CD4-positive, alpha-beta memory T cell (primary cell): ENCODE measurements at regions of chr9 and their contacts with region 1.

Region 1: DNA sequence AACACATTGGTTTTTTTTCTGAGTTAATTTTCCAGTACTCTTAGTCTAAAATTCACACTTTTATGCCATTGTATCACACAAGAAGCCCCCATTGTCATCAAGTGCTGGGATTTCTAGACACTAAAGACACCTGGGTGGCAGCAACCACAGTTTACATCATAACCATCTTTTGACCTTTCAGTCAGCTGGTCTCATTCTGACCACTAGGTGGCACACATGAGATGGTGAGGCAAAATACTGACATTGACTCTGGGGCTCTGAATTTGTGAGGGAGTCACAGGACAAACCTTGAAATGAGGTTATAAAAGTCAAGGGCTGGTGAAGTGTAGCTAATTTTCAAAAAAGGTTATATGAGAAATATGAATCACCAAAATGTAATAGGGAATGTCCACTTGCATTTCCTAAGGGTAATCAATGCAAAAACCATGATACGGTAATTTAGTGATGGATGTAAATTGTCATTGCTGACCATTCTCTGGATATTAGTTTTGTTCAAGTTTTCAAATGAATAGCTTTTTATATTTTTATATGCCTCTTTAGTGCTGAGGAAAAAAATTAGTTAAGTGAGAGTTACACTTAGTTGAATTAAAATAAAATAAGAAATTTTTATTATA is 229.4 kb downstream of the DMAC1 start:
- DNase-seq: peak; percentile 58 to 66 (median 63)
- H3K4me3 ChIP-seq: no peak overlapping the region
- H3K4me3 Mint-ChIP-seq: no peak overlapping the region
- H3K27ac ChIP-seq: no peak overlapping the region
- H3K27ac Mint-ChIP-seq: peak overlapping the region in 1 of 7 donors; percentile 32
- H3K4me1 ChIP-seq: no peaks in the 10 kb centered on the region
- H3K4me1 Mint-ChIP-seq: peaks cover 0 to 4% (median 0%) of the 10 kb centered on the region in 4 donors
- H3K27me3 ChIP-seq: no peaks in the 10 kb centered on the region
- H3K27me3 Mint-ChIP-seq: peaks cover 13% of the 10 kb centered on the region in 2 donors

Region 2: GRCh38 chr9:7613931-7614330 is 43.7 kb after region 1 on chr9:
- CTCF ChIA-PET with region 1: interaction called, 49 read pairs
- POLR2A ChIA-PET with region 1: interaction called, 4 read pairs
- intact Hi-C with region 1: loop called (anchors 1 kb)
- DNase-seq: peak in 4 of 5 donors; percentile 32 to 34 (median 34)
- H3K4me3 ChIP-seq: peak overlapping the region in 1 of 2 donors; percentile 16
- H3K4me3 Mint-ChIP-seq: peak overlapping the region; percentile 58 to 85 (median 78)
- H3K27ac ChIP-seq: no peak overlapping the region
- H3K27ac Mint-ChIP-seq: peak overlapping the region in 6 of 7 donors; percentile 38 to 88 (median 76)
- H3K4me1 ChIP-seq: peaks cover 35% of the 10 kb centered on the region
- H3K4me1 Mint-ChIP-seq: peaks cover 17 to 45% (median 32%) of the 10 kb centered on the region in 4 donors
- H3K27me3 ChIP-seq: no peaks in the 10 kb centered on the region
- H3K27me3 Mint-ChIP-seq: no peaks in the 10 kb centered on the region

Region 3: DNA sequence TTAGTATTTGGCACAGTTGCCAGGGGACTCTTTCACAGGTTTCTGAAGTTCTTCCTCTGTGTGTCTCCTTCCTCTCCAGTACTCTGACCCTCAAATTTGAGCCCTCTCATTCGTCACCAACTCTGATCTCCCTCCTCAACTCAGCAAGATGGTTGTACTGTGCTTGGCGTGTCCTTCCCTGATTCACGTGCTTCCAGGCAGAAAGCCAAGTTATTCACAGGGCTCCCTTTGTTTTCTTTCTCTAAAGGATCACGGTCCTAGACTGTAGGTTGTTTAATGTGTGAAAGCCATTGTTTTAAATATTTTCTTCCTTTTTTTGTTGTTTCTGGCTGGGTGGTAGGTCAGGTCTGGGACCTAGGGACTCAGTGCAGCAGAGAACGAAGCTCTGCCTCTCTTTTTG is 86.4 kb after region 1 on chr9:
- CTCF ChIA-PET with region 1: interaction called, 18 read pairs
- POLR2A ChIA-PET with region 1: no interaction called
- intact Hi-C with region 1: loop called (anchors 1 kb)
- DNase-seq: no peak
- H3K4me3 ChIP-seq: no peak overlapping the region
- H3K4me3 Mint-ChIP-seq: no peak overlapping the region
- H3K27ac ChIP-seq: no peak overlapping the region
- H3K27ac Mint-ChIP-seq: peak overlapping the region in 2 of 7 donors; percentile 2 to 44
- H3K4me1 ChIP-seq: no peaks in the 10 kb centered on the region
- H3K4me1 Mint-ChIP-seq: peaks cover 0 to 5% (median 4%) of the 10 kb centered on the region in 4 donors
- H3K27me3 ChIP-seq: no peaks in the 10 kb centered on the region
- H3K27me3 Mint-ChIP-seq: no peaks in the 10 kb centered on the region

Region 4: DNA sequence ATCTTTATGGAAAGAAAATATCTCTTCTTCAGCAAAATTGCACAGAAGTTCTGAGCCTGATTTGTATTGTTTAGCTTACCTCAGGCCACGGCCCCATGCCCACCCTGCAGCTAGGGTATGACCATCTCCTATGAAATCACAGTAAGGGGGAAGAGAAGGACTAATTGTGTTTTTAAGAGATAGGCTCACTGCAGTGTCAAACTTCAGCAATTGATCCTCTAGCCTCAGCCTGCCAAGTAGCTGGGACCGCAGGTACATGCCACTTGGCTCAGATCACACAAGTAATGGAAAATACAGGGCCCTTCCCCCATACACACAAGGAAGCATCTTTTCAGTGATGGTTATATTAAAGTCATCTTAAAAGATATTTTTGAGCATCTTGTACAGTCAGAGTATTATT is 169.4 kb after region 1 on chr9:
- CTCF ChIA-PET with region 1: no interaction called
- POLR2A ChIA-PET with region 1: no interaction called
- intact Hi-C with region 1: no loop called
- DNase-seq: no peak
- H3K4me3 ChIP-seq: no peak overlapping the region
- H3K4me3 Mint-ChIP-seq: no peak overlapping the region
- H3K27ac ChIP-seq: no peak overlapping the region
- H3K27ac Mint-ChIP-seq: no peak overlapping the region
- H3K4me1 ChIP-seq: no peaks in the 10 kb centered on the region
- H3K4me1 Mint-ChIP-seq: no peaks in the 10 kb centered on the region
- H3K27me3 ChIP-seq: no peaks in the 10 kb centered on the region
- H3K27me3 Mint-ChIP-seq: peaks cover 0 to 2% of the 10 kb centered on the region in 2 donors

Region 5: DNA sequence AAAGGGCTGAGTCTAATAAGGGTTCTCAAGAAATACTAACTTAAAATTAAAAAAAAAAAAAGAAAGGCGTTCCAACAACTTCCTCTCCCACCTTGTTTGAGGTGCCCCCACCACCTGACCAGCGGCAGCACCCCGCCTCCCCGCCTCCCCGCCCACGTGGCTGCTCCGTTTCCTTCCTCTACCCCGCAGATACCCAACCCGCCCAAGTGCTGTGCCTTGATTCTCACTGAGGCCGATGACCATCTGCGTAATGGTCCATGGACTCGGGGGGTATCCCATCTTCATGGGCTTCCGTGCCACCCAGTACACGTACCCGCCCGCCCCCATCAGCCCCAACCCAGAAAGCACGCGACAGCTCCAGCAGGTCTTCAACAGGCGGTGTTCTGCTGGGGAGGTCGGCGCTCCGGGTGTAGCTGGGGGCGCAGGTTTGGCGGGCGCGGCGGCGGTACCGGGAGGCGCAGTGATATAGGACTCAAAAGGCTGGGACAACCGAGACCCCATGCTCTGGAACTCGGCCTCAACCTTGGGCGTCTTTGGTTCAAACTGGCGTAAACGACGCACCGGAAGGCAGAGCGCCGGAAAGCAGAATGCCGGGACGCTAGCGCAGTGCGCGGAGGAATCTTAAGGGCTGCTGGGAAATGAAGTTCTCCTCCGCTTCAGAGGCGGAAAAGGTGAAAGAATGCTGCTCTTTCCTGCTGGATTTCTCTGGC is 229.2 kb after region 1 on chr9 and contains the start of gene DMAC1:
- CTCF ChIA-PET with region 1: interaction called, 7 read pairs
- POLR2A ChIA-PET with region 1: interaction called, 5 read pairs
- intact Hi-C with region 1: loop called (anchors 10 kb)
- DNase-seq: peak; percentile 72 to 81 (median 77)
- H3K4me3 ChIP-seq: peak within 1 kb of the TSS; percentile 27 to 92
- H3K4me3 Mint-ChIP-seq: peak within 1 kb of the TSS; percentile 92 to 99 (median 95)
- H3K27ac ChIP-seq: peak within 1 kb of the TSS; percentile 88
- H3K27ac Mint-ChIP-seq: peak within 1 kb of the TSS; percentile 94 to 96 (median 96)
- H3K4me1 ChIP-seq: peaks cover 25% of the 10 kb centered on the region
- H3K4me1 Mint-ChIP-seq: peaks cover 17 to 55% (median 25%) of the 10 kb centered on the region in 4 donors
- H3K27me3 ChIP-seq: no peaks in the 10 kb centered on the region
- H3K27me3 Mint-ChIP-seq: no peaks in the 10 kb centered on the region
- total RNA-seq, gene DMAC1: 30.8 to 38.0 TPM

Region 6: GRCh38 chr9:7844242-7844641 is 274.0 kb after region 1 on chr9:
- CTCF ChIA-PET with region 1: interaction called, 6 read pairs
- POLR2A ChIA-PET with region 1: no interaction called
- intact Hi-C with region 1: loop called (anchors 5 kb)
- DNase-seq: peak in 4 of 5 donors; percentile 24 to 35 (median 28)
- H3K4me3 ChIP-seq: no peak overlapping the region
- H3K4me3 Mint-ChIP-seq: no peak overlapping the region
- H3K27ac ChIP-seq: no peak overlapping the region
- H3K27ac Mint-ChIP-seq: no peak overlapping the region
- H3K4me1 ChIP-seq: no peaks in the 10 kb centered on the region
- H3K4me1 Mint-ChIP-seq: peaks cover 0 to 5% (median 2%) of the 10 kb centered on the region in 4 donors
- H3K27me3 ChIP-seq: no peaks in the 10 kb centered on the region
- H3K27me3 Mint-ChIP-seq: no peaks in the 10 kb centered on the region

Region 7: DNA sequence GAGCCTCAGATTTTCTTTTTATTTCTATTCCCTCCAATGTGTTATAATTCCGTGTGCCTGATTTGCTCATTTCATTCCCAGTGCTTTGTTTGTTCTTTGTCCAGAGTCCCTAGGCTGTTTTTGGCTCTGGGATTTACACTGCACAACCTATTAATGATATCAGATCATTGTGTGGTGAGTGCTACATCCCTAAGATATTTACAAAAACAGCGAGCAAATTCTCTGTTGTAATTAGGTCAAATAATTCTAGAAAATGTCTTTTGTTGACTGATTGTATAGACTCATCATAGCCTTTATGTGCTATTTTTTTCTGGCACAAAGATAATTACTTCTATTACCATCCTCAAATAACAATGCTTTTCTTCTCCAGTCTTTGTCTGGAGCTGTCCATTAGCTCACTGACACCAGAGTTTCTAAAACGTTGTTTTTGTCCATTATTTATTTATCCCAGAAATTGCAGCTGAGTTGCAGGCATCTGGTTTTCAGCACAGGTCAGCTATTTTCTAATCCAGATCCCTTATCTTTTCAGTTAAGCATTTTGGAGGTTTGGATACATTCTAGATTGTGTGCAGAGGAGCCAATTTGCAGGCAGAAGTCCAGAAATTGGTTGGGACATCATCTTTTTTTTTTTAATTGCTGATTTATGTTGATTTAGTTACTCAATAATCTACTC is 609.3 kb after region 1 on chr9:
- CTCF ChIA-PET with region 1: no interaction called
- POLR2A ChIA-PET with region 1: no interaction called
- intact Hi-C with region 1: loop called (anchors 1 kb)
- DNase-seq: no peak
- H3K4me3 ChIP-seq: no peak overlapping the region
- H3K4me3 Mint-ChIP-seq: no peak overlapping the region
- H3K27ac ChIP-seq: no peak overlapping the region
- H3K27ac Mint-ChIP-seq: no peak overlapping the region
- H3K4me1 ChIP-seq: no peaks in the 10 kb centered on the region
- H3K4me1 Mint-ChIP-seq: no peaks in the 10 kb centered on the region
- H3K27me3 ChIP-seq: no peaks in the 10 kb centered on the region
- H3K27me3 Mint-ChIP-seq: peaks cover 3 to 9% of the 10 kb centered on the region in 2 donors

Region 8: DNA sequence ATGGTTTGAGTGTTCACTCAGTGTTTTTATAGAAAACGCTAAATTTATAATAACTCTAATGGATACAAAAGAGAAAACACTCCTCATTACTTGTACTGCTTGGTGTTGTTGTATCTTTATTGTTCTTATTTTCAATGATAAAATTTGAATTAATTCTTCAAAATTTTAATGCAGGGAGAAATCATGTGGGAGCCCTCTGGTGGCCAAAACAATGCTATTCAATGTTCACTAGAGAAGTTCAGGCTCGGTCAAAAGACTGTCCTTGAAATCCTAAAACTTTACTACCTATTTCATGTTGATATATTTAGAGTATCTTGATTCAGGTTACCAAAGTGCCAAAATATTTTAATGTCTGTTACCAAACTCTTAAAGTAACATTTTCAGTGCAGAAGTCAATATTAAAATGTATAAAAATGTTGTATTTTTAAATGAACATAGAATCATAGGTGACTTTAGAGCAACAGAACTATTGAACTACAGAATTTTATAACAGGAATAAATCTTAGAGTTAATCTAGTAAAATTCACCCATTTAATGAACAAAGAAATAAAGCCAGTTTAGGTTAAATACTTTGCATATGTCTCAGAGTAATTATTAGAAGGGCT is 1782.8 kb after region 1 on chr9:
- CTCF ChIA-PET with region 1: no interaction called
- POLR2A ChIA-PET with region 1: no interaction called
- intact Hi-C with region 1: loop called (anchors 5 kb)
- DNase-seq: no peak
- H3K4me3 ChIP-seq: no peak overlapping the region
- H3K4me3 Mint-ChIP-seq: no peak overlapping the region
- H3K27ac ChIP-seq: no peak overlapping the region
- H3K27ac Mint-ChIP-seq: no peak overlapping the region
- H3K4me1 ChIP-seq: no peaks in the 10 kb centered on the region
- H3K4me1 Mint-ChIP-seq: no peaks in the 10 kb centered on the region
- H3K27me3 ChIP-seq: no peaks in the 10 kb centered on the region
- H3K27me3 Mint-ChIP-seq: no peaks in the 10 kb centered on the region